Ascending aorta (tissue), 2 donors: ENCODE measurements at regions of chr10 and their contacts with region 1.

Region 1: DNA sequence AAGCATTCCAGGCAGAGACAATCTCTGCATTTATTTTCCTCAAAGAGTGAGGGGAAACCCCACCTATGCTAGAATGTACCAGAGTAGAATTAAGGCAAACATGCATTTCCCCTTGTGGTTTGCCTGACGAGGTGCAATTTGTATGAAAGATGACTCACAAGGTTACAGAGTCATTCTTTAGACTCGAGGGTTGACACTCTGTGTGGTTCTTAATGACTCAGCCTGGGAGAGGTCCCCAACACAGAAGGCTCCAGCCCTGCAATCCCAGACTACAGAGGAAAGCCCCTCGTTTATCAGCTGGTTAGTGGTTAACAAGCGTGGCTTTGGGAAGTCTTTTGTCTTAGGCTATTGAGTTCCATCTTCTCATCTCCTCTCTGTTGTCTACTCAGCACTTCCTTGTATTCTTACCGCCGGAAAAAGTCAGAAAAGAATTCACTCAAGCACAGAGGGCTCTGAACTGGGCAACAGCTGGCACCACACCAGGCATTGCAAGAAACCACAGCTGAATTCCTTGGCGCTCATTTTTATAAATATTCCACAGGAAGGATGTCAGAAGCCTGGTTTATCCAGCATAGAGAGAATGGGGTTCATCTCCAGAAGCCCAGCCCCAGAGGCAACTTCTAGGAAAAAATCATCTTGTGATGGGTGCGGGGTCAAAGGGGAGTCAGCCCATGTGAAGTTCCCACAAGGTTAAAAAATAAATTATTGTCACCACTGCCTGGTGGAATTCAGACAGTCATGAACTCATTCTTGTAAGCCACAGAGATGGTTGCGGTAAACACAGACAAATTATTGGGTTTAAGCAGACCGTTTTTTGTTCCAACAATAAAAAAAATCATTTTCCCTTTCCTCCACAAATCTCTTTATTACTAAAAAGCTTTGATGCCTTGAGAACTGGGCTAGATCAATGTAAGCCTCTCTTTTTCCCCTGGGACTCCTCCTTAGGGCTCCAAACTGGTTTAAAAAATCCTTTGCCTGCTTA is 24.5 kb upstream of the SVIL start:
- DNase-seq: peak; percentile 51 to 85
- H3K4me3 ChIP-seq: no peak overlapping the region
- H3K27ac ChIP-seq: peak overlapping the region; percentile 73 to 81
- H3K4me1 ChIP-seq: peaks cover 18 to 42% of the 10 kb centered on the region in 2 donors
- H3K27me3 ChIP-seq: no peaks in the 10 kb centered on the region
- CTCF ChIP-seq: peak; percentile 53 to 60 (median 56)

Region 2: DNA sequence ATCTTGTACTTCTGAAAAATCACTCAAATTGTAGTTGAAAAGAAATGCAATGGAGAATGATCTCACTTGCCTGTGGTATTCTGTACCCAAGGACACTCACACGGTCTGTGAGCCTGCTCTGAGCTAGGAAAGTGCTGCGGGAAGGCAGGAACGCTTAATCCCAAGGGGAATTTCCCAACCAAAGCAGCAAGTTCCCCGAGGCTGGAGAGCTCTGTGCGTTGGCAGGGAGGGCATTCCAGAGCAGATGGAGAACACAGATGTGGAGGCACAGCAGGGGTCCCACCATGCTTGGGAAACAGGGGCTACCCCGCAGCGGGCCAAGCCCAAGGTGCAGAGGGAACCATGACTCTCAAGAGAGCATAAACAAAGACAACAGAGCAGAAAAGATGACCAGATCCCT is 38.1 kb before region 1 on chr10:
- intact Hi-C with region 1: loop called (anchors 5 kb)
- DNase-seq: peak; percentile 32 to 87
- H3K4me3 ChIP-seq: peak overlapping the region in 1 of 2 donors; percentile 7
- H3K27ac ChIP-seq: peak overlapping the region; percentile 65 to 79
- H3K4me1 ChIP-seq: peaks cover 2 to 62% of the 10 kb centered on the region in 2 donors
- H3K27me3 ChIP-seq: no peaks in the 10 kb centered on the region
- CTCF ChIP-seq: no peak

Region 3: GRCh38 chr10:29646238-29646902 is 12.9 kb before region 1 on chr10:
- intact Hi-C with region 1: loop called (anchors 2 kb)
- DNase-seq: no peak
- H3K4me3 ChIP-seq: peak overlapping the region in 1 of 2 donors; percentile 33
- H3K27ac ChIP-seq: peak overlapping the region; percentile 73 to 76
- H3K4me1 ChIP-seq: peaks cover 21 to 60% of the 10 kb centered on the region in 2 donors
- H3K27me3 ChIP-seq: no peaks in the 10 kb centered on the region
- CTCF ChIP-seq: no peak

Region 4: DNA sequence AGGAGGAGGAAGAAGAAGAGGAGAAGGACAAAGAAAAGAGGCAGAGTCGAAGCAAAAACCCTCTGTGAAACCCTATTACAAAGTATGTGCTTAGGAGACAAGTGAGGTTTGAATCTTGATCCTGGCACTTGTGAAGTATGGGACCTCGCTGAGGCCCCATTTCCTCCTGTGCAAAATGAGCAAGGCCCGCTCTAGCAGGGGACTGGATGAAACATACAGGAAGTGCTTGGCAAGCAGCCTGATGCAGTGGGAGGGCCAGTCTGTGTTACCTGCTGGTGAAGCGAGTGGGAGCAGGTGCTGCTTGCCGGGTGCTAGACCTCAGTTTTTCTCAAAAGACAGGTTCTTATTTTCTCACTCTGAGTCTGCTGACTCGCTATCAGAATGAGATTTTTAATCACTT is 249.7 kb after region 1 on chr10:
- intact Hi-C with region 1: no loop called
- DNase-seq: no peak
- H3K4me3 ChIP-seq: no peak overlapping the region
- H3K27ac ChIP-seq: no peak overlapping the region
- H3K4me1 ChIP-seq: no peaks in the 10 kb centered on the region
- H3K27me3 ChIP-seq: no peaks in the 10 kb centered on the region
- CTCF ChIP-seq: no peak